Heart left ventricle (tissue), 16 donors: ENCODE measurements at regions of chr11 and their contacts with region 1.

Region 1: DNA sequence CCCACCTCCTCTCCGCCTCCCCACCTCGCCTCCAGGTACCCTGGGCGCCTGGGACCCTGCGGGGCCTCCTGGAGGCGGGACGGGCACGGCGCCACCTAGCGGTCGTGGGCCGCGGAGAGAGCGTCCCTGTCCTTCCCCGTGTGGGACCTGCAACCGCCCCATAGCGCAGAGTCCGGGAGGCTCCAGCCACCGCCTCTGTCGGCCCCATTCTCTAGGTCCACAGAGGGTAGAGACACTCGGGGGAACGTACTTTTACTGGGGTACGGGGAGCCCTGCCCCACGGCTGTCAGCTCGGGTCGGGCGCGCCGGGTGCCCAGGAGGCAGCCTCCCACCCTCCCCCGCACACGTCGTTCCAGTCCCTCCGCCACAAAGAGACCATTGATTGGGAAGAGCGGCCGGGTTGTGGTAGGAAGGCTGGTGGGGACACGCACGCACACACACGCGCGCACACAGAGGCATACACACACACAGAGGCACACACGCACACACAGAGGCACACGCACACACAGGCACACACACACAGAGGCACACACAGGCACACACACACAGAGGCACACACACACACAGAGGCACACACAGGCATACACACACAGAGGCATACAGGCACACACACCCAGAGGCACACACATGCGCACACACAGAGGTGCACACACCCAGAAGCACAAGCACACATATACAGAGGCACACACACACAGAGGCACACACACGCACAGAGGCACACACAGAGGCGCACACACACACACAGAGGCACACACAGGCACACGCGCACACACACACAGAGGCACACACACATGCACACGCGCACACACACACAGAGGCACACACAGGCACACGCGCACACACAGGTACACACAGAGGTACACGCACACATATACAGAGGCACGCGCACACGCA is 12.6 kb upstream of the NECTIN1 start:
- DNase-seq: peak; percentile 49 to 82 (median 52)
- ATAC-seq: peak; percentile 62 to 87 (median 78)
- H3K4me3 ChIP-seq: peak overlapping the region in 9 of 12 donors; percentile 12 to 38 (median 25)
- H3K27ac ChIP-seq: no peak overlapping the region
- H3K4me1 ChIP-seq: peaks cover 0 to 13% (median 0%) of the 10 kb centered on the region in 12 donors
- H3K27me3 ChIP-seq: peaks cover 0 to 25% (median 9%) of the 10 kb centered on the region in 9 donors
- CTCF ChIP-seq: peak; percentile 73 to 88 (median 79)
- POLR2A ChIP-seq: no peak

Region 2: DNA sequence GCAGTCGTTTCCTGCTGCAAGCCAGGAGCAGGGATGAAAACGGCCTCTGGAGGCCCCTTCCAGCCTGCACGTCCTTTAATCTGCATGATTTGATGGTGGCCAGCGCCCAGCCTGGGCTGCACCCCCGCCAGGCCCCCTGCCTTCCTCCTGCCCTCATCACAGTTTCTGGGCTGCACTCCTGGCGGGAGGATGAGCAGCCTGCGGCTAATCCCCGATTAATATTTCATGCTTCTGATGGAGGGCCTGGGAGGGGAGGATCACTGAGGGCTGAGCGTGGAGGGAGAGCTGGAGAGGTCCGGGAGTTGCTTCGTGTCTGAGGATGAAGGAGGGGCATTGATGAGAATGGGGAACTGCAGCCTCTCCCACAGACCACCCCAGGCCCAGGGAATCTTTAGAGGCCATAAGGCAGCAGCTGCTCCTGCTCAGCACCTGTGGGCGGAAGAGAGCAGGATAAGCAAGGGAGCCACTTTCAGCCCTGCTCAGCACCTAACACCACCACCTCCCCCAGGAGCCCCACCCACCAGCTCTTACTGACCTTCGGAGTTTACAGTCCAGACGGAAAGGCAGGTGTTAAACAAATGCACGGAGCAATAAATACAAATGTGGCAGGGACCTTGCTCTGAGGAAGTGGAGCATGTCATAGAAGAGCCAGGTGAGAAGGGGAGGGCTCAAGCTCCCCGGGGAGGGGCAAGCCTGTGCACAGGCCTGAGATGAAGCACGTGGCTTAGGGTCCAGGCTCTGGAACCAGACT is 122.4 kb after region 1 on chr11:
- intact Hi-C with region 1: no loop called
- DNase-seq: no peak
- ATAC-seq: no peak
- H3K4me3 ChIP-seq: no peak overlapping the region
- H3K27ac ChIP-seq: no peak overlapping the region
- H3K4me1 ChIP-seq: peaks cover 0 to 4% (median 0%) of the 10 kb centered on the region in 12 donors
- H3K27me3 ChIP-seq: peaks cover 0 to 9% (median 0%) of the 10 kb centered on the region in 9 donors
- CTCF ChIP-seq: no peak
- POLR2A ChIP-seq: no peak

Region 3: DNA sequence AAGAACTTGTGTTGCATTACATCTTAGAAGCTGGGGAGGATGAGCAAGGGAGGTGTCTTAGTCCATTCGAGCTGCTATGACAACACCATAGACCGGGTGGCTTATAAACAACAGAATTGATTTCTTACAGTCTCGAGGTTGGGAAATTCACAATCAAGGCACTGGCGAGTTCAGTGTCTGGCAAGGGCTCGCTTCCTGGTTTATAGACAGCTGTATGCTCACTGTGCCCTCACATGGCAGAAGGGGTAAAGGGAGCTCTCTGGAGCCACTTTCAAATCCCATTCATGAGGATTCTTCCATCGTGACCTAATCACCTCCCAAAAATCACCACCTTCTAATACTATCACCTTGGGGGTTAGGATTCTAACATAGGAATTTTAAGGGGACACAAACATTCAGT is 137.4 kb after region 1 on chr11:
- intact Hi-C with region 1: loop called in 1 of 10 experiments (anchors 5 kb)
- DNase-seq: no peak
- ATAC-seq: peak; percentile 35 to 69 (median 68)
- H3K4me3 ChIP-seq: no peak overlapping the region
- H3K27ac ChIP-seq: no peak overlapping the region
- H3K4me1 ChIP-seq: peaks cover 0 to 11% (median 0%) of the 10 kb centered on the region in 12 donors
- H3K27me3 ChIP-seq: peaks cover 0 to 24% (median 0%) of the 10 kb centered on the region in 9 donors
- CTCF ChIP-seq: peak in 7 of 12 donors; percentile 12 to 38 (median 23)
- POLR2A ChIP-seq: no peak

Region 4: DNA sequence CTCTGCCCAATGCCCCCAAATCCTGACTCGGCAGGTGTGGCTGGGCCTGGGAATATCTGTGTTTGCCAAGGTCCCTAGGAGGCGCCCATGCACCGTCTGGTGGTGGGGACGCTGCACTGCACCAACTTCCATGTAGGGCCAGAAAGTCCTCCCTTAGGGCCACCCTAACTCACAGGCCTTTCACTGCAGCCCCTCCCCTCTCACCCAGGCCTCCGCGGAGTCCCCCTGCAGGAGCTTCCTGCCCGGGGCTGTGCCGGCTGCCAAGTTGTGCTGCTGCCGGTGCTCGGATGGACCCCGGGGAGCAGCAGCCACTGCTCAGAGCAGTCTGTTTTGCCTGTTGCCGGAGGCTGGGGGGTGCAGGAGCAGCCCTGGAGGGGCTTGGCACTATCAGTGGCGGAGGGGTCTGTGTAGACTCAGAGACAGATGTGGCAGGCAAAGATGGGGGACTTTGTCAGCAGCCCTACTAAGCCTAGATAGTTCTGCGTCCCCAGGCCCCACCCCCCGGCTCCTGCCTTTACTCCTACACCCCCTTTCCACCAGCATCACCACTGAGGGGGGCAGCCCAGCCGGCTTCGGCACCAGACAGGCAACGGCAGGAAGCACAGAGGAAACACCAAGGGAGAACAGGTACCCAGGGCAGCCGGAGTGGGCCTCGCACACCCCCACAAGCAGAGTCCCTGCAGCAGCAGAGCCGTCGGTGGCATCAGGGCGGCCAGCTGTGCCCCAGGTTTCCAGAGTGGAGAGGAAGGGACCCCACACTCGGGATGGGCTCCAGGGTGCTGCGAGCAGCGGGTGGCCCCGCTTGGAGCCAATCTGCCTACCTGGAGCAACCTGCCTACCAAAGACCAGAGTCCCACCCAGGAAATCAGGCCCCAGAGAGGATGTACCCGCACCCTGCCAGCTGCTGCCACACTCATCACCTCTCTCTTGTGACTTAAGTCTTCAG is 272.0 kb after region 1 on chr11:
- intact Hi-C with region 1: loop called in 1 of 10 experiments (anchors 5 kb)
- DNase-seq: peak in 4 of 5 donors; percentile 37 to 57 (median 48)
- ATAC-seq: peak; percentile 74 to 92 (median 79)
- H3K4me3 ChIP-seq: no peak overlapping the region
- H3K27ac ChIP-seq: no peak overlapping the region
- H3K4me1 ChIP-seq: peaks cover 0 to 6% (median 0%) of the 10 kb centered on the region in 12 donors
- H3K27me3 ChIP-seq: peaks cover 0 to 72% (median 10%) of the 10 kb centered on the region in 9 donors
- CTCF ChIP-seq: peak; percentile 44 to 78 (median 67)
- POLR2A ChIP-seq: no peak